IMR-90 (cell line): ENCODE measurements at regions of chr18 and their contacts with region 1.

Region 1: DNA sequence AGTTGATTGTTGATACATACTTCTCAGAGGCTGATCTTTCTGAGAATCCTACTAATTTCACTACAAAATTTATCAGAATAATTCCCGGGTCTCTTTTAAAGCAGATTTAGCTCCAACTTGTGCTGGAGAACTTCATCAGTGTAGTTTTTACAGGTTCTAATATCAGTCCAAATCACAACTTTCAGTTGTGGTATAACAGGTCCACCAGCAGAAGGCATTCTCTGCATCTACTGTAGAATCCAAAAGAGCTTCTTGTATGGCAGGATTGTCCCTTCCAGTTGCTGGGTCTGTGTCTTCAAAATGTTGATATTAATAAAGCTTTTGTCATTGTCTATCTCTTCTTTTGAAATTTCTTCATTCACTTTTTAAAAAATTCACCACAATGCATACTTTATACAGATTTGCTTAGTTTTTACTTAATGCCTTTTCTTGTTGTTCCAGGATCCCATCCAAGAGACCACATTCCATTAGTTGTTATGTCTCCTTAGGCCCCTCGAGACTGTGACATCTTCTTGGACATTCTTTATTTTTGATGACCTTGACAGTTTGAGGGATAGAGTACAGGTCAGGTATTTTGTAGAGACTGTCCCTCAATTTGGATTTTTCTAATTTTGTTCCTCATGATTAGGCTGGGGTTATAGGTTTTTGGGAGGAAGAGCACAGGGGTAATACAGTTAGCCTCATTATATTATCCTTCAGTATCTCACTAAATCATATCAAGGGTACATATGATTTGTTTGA is 490.5 kb upstream of the MEX3C start:
- DNase-seq: no peak
- ATAC-seq: no peak
- H3K4me3 ChIP-seq: no peak overlapping the region
- H3K27ac ChIP-seq: no peak overlapping the region
- H3K4me1 ChIP-seq: no peaks in the 10 kb centered on the region
- H3K27me3 ChIP-seq: no peaks in the 10 kb centered on the region
- CTCF ChIP-seq: no peak
- POLR2A ChIP-seq: no peak
- RAD21 ChIP-seq: no peak

Region 2: GRCh38 chr18:51852681-51853080 is 164.7 kb after region 1 on chr18:
- CTCF ChIA-PET with region 1: interaction called, 10 read pairs
- POLR2A ChIA-PET with region 1: no interaction called
- dilution Hi-C with region 1: no loop called
- in situ Hi-C with region 1: no loop called
- intact Hi-C with region 1: no loop called
- DNase-seq: no peak
- ATAC-seq: no peak
- H3K4me3 ChIP-seq: no peak overlapping the region
- H3K27ac ChIP-seq: no peak overlapping the region
- H3K4me1 ChIP-seq: no peaks in the 10 kb centered on the region
- H3K27me3 ChIP-seq: no peaks in the 10 kb centered on the region
- CTCF ChIP-seq: no peak
- POLR2A ChIP-seq: no peak
- RAD21 ChIP-seq: no peak

Region 3: DNA sequence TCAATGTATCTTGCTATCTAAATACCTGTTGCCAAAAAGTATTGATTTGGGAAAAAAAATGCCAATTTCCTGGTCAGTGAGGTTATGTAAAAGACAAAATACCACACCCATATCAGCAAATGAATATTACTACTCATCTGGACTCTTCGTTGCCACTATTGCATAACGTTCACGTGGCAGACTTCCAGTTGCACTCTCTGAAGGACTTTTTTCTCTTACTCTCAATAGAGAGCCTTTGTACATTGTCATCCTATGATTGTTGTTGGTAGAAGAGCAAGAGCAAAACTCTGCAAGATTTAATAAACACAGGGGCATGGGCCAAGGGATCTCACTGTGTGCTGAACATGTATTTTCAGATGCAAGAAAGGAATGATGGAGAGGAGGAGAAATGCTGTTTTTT is 1846.7 kb after region 1 on chr18:
- CTCF ChIA-PET with region 1: no interaction called
- POLR2A ChIA-PET with region 1: no interaction called
- dilution Hi-C with region 1: no loop called
- in situ Hi-C with region 1: no loop called
- intact Hi-C with region 1: no loop called
- DNase-seq: no peak
- ATAC-seq: no peak
- H3K4me3 ChIP-seq: no peak overlapping the region
- H3K27ac ChIP-seq: no peak overlapping the region
- H3K4me1 ChIP-seq: no peaks in the 10 kb centered on the region
- H3K27me3 ChIP-seq: no peaks in the 10 kb centered on the region
- CTCF ChIP-seq: no peak
- POLR2A ChIP-seq: no peak
- RAD21 ChIP-seq: no peak